ENCODE measurements at regions of chr19 and their contacts with region 1.

Region 1: DNA sequence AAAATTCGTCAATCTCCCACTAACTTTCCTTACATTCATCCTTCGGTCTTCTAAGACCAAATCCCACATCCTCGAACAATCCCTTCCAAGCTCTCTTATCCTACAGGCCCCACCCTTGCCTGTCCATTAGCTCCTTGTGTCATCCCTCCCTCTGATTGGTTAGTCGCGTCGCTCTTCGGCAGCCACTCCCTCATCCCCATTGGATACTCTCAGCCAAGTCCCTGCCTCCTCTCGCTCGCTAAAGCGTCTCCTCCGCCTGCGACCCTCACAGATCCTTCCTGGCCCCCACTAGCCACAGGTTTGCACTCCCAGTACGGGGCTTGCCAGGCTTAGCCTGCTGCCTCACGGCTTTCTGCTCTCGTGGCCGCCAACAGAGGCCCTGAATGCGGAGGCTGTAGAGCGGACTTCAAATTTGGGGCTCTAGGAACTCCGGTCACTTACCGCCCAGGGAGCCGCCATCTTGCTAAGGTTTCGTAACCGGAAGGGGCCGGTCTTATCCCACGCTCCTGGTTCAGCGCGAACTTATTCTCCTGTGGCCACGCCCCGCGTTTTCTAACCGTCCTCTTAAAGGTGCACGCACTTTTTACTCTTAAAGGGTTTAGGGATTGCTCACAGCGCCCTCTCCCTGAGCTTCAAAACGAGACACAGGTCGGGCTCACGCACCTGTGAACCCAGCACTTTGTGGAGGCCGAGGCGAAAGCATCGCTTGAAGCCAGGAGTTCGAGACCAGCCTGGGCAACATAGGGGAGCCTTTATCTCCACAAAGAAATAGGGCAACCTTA is at the start of gene DMAC2:
- DNase-seq: peak; percentile 100
- ATAC-seq: peak; percentile 96 to 99
- H3K4me3 ChIP-seq: peak within 1 kb of the TSS; percentile 52
- H3K27ac ChIP-seq: peak within 1 kb of the TSS; percentile 81 to 86
- H3K4me1 ChIP-seq: peaks cover 13% of the 10 kb centered on the region; the same call in 2 of the 3 replicates
- CTCF ChIP-seq: peak; percentile 85
- EP300 ChIP-seq: no peak; a peak in 1 of 5 replicates
- POLR2A ChIP-seq: peak; percentile 80
- RAD21 ChIP-seq: peak; percentile 38 to 51; a peak in 2 of 5 replicates
- polyA plus RNA-seq, gene DMAC2: 128 and 132 TPM in 2 replicates

Region 2: DNA sequence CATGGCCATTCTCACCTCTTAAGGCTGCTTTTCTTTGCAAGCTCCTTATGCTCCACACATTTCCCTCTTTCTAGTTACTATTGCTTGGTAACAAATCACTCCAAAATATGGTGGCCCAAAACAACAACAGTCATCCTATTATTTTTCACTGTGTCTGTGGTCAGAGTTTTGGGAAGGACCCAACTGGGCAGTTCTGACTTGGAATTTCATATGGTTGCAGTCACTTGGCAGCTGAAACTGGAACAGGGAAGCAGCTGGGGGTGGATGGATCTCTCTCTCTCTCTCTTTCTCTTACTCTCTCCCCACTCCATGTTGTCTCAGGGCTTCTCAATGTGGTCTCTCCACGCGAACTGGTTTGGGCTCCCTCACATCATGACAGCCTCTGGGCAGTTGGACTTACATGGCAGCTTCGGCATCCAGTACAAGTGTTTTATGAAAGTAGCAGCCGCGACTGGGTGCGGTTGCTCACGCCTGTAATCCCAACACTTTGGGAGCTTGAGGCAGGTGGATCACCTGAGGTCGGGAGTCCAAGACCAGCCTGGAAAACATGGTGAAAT is 788.8 kb before region 1 on chr19:
- CTCF ChIA-PET with region 1: no interaction called
- POLR2A ChIA-PET with region 1: no interaction called
- DNase-seq: no peak
- ATAC-seq: no peak
- H3K4me3 ChIP-seq: no peak overlapping the region
- H3K27ac ChIP-seq: no peak overlapping the region
- H3K4me1 ChIP-seq: peaks cover 11% of the 10 kb centered on the region
- CTCF ChIP-seq: no peak
- EP300 ChIP-seq: no peak
- POLR2A ChIP-seq: no peak
- RAD21 ChIP-seq: no peak

Region 3: GRCh38 chr19:41386442-41386841 is 53.2 kb before region 1 on chr19:
- CTCF ChIA-PET with region 1: interaction called, 3 read pairs
- POLR2A ChIA-PET with region 1: interaction called, 10 read pairs
- DNase-seq: no peak
- ATAC-seq: peak in 1 of 2 experiments; percentile 27; a peak in 1 of 6 replicates
- H3K4me3 ChIP-seq: no peak overlapping the region
- H3K27ac ChIP-seq: no peak overlapping the region
- H3K4me1 ChIP-seq: no peaks in the 10 kb centered on the region
- CTCF ChIP-seq: no peak
- EP300 ChIP-seq: no peak
- POLR2A ChIP-seq: no peak
- RAD21 ChIP-seq: no peak

Region 4: GRCh38 chr19:41409288-41409687 is 30.3 kb before region 1 on chr19:
- CTCF ChIA-PET with region 1: interaction called, 7 read pairs
- POLR2A ChIA-PET with region 1: interaction called, 20 read pairs
- DNase-seq: peak; percentile 55 to 60
- ATAC-seq: peak; percentile 55 to 58; a peak in 5 of 6 replicates
- H3K4me3 ChIP-seq: no peak overlapping the region
- H3K27ac ChIP-seq: no peak overlapping the region
- H3K4me1 ChIP-seq: peaks cover 12% of the 10 kb centered on the region
- CTCF ChIP-seq: no peak
- EP300 ChIP-seq: no peak
- POLR2A ChIP-seq: no peak
- RAD21 ChIP-seq: no peak

Region 5: GRCh38 chr19:41420101-41420880 is 19.3 kb before region 1 on chr19:
- CTCF ChIA-PET with region 1: interaction called, 12 read pairs
- POLR2A ChIA-PET with region 1: interaction called, 12 read pairs
- DNase-seq: no peak
- ATAC-seq: no peak
- H3K4me3 ChIP-seq: no peak overlapping the region
- H3K27ac ChIP-seq: no peak overlapping the region
- H3K4me1 ChIP-seq: no peaks in the 10 kb centered on the region
- CTCF ChIP-seq: no peak
- EP300 ChIP-seq: no peak
- POLR2A ChIP-seq: no peak
- RAD21 ChIP-seq: no peak

Region 6: DNA sequence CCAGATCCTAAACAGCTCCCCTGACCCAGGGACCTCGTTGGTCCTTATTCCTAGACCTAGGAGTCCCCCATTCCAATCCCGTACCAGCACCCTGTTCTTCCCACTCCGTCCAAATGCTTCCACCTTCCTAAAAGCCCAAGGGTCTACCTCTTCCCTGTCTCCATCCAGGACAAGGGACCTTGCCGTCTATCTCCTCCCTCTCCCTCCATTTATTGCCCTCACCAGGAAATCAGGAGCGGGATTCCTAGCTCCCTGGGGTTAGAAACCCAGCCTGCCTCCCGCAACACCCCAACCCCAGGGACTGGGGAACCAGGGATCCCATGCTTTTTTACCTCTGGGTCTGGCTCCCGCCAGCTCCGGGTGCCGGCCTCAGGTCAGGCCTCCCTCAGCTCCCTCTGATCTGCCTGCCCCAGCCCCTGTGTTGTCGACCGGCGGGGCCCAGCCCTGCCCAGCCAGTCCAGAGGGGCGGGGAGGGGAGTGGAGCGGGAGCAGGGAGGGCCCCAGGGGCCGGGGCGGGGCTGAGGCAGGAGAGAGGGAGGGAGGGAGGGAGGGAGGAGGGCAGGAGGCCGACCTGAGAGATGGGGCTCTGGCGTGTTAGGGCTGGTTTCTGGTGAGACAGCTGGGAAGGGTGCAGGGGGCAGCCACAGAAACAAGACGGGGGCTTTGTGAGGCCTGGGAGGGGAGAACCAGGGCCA is 12.5 kb before region 1 on chr19 and contains the start of gene B3GNT8:
- CTCF ChIA-PET with region 1: interaction called, 57 read pairs
- POLR2A ChIA-PET with region 1: interaction called, 19 read pairs
- DNase-seq: no peak
- ATAC-seq: peak; percentile 7 to 10; a peak in 3 of 6 replicates
- H3K4me3 ChIP-seq: no peak within 1 kb of the TSS
- H3K27ac ChIP-seq: no peak within 1 kb of the TSS
- H3K4me1 ChIP-seq: no peaks in the 10 kb centered on the region
- CTCF ChIP-seq: no peak
- EP300 ChIP-seq: no peak
- POLR2A ChIP-seq: no peak
- RAD21 ChIP-seq: no peak
- polyA plus RNA-seq, gene B3GNT8: not detected in 2 replicates